GM12878 (cell line): ENCODE measurements at regions of chr10 and their contacts with region 1.

Region 1: DNA sequence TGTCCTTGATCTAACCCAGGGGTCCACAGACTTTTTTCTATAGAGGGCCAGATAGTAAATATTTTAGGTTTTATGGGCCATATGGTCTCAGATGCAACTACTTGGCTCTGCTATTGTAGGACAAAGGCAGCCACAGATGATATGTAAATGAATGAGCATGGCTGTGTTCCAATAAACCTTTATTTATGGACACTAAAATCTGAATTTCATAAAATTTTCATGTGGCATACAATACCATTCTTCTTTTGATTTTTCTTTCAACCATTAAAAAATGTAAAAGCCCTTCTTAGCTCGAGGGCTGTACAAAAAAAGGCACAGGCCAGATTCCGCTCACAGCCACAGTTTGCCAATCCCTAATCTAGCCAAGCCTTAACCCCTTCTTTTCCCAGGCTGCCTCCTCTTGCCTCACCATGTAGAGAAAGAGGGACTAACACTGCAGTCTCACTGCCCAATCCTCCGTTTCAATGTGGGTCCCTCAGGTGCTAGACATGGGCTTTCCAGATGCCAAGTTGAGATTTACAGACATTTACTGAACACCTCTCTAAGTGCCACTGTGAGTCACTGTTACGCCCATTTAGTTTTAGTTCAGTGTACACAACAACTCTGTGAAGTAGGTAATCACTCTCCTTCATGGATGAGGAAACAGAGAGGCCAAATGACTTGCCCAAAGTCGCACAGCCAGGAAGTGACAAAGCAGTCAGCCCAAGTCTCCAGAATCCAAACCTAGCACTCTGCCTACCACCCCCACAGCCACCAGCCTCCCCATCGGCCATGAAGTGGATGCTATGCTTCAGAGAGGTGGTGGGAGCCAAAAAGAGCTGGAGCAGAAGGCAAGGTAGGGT is 132.6 kb upstream of the PDLIM1 start:
- DNase-seq: no peak
- ATAC-seq: peak; percentile 72
- H3K4me3 ChIP-seq: no peak overlapping the region
- H3K27ac ChIP-seq: no peak overlapping the region
- H3K4me1 ChIP-seq: peaks cover 5% of the 10 kb centered on the region; the same call in 1 of the 2 replicates
- H3K27me3 ChIP-seq: no peaks in the 10 kb centered on the region; a peak in 2 of 4 replicates
- CTCF ChIP-seq: no peak
- EP300 ChIP-seq: no peak
- POLR2A ChIP-seq: no peak
- RAD21 ChIP-seq: no peak

Region 2: GRCh38 chr10:95391581-95392216 is 31.7 kb before region 1 on chr10:
- CTCF ChIA-PET with region 1: interaction called, 3 read pairs
- POLR2A ChIA-PET with region 1: interaction called, 4 read pairs
- RAD21 ChIA-PET with region 1: interaction called, 6 read pairs
- SMC1A ChIA-PET with region 1: interaction called, 10 read pairs
- in situ Hi-C with region 1: no loop called
- intact Hi-C with region 1: no loop called
- DNase-seq: no peak
- ATAC-seq: peak; percentile 32
- H3K4me3 ChIP-seq: no peak overlapping the region
- H3K27ac ChIP-seq: no peak overlapping the region
- H3K4me1 ChIP-seq: peaks cover 51% of the 10 kb centered on the region
- H3K27me3 ChIP-seq: no peaks in the 10 kb centered on the region
- CTCF ChIP-seq: peak in 2 of 3 experiments; percentile 3 to 18; a peak in 1 of 6 replicates
- EP300 ChIP-seq: no peak
- POLR2A ChIP-seq: no peak
- RAD21 ChIP-seq: no peak

Region 3: GRCh38 chr10:95445837-95446486 is 22.6 kb after region 1 on chr10:
- CTCF ChIA-PET with region 1: interaction called, 20 read pairs
- POLR2A ChIA-PET with region 1: interaction called, 3 read pairs
- RAD21 ChIA-PET with region 1: interaction called, 3 read pairs
- SMC1A ChIA-PET with region 1: interaction called, 3 read pairs
- in situ Hi-C with region 1: no loop called
- intact Hi-C with region 1: no loop called
- DNase-seq: no peak
- ATAC-seq: peak; percentile 83
- H3K4me3 ChIP-seq: no peak overlapping the region
- H3K27ac ChIP-seq: no peak overlapping the region
- H3K4me1 ChIP-seq: peaks cover 7% of the 10 kb centered on the region
- H3K27me3 ChIP-seq: no peaks in the 10 kb centered on the region; a peak in 2 of 4 replicates
- CTCF ChIP-seq: peak; percentile 85 to 86 (median 86)
- EP300 ChIP-seq: no peak
- POLR2A ChIP-seq: no peak
- RAD21 ChIP-seq: peak; percentile 77

Region 4: GRCh38 chr10:95456516-95456915 is 33.1 kb after region 1 on chr10:
- CTCF ChIA-PET with region 1: no interaction called
- POLR2A ChIA-PET with region 1: no interaction called
- RAD21 ChIA-PET with region 1: no interaction called
- SMC1A ChIA-PET with region 1: no interaction called
- in situ Hi-C with region 1: no loop called
- intact Hi-C with region 1: no loop called
- DNase-seq: no peak
- ATAC-seq: no peak
- H3K4me3 ChIP-seq: no peak overlapping the region
- H3K27ac ChIP-seq: no peak overlapping the region
- H3K4me1 ChIP-seq: no peaks in the 10 kb centered on the region
- H3K27me3 ChIP-seq: peaks cover 0 to 2% of the 10 kb centered on the region in 2 experiments; a peak in 1 of 4 replicates
- CTCF ChIP-seq: no peak
- EP300 ChIP-seq: no peak
- POLR2A ChIP-seq: no peak
- RAD21 ChIP-seq: no peak